ENCODE measurements at regions of chr7 and their contacts with region 1.

Region 1: GRCh38 chr7:2863461-2864066 is 19.5 kb upstream of the GNA12 start:
- DNase-seq: peak; percentile 94
- ATAC-seq: peak; percentile 97
- H3K4me3 ChIP-seq: peak overlapping the region; percentile 54
- H3K27ac ChIP-seq: peak overlapping the region; percentile 97
- H3K4me1 ChIP-seq: peaks cover 23% of the 10 kb centered on the region
- H3K27me3 ChIP-seq: no peaks in the 10 kb centered on the region
- CTCF ChIP-seq: no peak

Region 2: DNA sequence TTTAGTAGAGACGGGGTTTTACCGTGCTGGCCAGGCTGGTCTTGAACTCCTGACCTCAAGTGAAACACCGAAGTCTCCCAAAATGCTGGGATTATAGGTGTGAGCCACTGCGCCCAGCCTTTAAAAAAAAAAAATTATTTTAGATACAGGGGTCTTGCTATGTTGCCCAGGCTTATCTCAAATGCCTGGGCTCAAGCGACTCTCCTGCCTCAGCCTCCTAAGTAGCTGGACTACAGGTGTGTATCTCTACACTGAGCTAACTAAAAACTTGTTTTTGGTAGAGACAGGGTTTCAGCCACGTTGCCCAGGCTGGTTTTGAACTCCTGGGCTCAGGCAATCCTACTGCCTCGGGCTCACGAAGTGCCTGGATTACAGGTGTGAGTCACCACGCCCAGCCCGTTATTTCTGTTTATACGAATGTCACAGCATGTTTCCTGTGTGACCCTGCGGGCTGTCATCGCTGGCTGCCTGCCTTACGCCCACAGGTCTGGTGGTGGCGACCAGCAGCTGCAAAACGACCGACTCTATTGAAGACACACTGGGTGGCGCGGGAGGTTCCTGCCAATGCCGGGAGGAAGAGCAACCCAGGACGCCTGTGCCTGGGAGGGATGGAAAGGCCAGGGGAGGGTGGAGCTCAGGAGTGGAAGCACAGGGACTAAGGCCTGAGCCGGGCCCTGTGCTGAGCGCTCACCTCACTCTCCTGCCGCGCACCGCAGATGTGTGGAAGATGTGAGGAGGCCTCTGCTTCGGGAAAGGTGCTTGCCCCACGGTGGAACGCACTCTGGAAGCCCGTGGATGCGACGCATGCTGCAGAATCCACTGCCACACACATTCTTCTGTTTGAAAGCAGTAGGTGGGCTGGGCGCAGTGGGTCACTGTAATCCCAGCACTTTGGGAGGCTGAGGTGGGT is 142.7 kb before region 1 on chr7:
- CTCF ChIA-PET with region 1: no interaction called
- POLR2A ChIA-PET with region 1: no interaction called
- intact Hi-C with region 1: loop called (anchors 5 kb)
- DNase-seq: peak; percentile 96
- ATAC-seq: peak; percentile 96
- H3K4me3 ChIP-seq: no peak overlapping the region
- H3K27ac ChIP-seq: peak overlapping the region; percentile 45
- H3K4me1 ChIP-seq: 0 out of 2 replicates have a peak, but pooled peaks cover 3% of the 10 kb centered on the region
- H3K27me3 ChIP-seq: no peaks in the 10 kb centered on the region
- CTCF ChIP-seq: peak; percentile 69

Region 3: DNA sequence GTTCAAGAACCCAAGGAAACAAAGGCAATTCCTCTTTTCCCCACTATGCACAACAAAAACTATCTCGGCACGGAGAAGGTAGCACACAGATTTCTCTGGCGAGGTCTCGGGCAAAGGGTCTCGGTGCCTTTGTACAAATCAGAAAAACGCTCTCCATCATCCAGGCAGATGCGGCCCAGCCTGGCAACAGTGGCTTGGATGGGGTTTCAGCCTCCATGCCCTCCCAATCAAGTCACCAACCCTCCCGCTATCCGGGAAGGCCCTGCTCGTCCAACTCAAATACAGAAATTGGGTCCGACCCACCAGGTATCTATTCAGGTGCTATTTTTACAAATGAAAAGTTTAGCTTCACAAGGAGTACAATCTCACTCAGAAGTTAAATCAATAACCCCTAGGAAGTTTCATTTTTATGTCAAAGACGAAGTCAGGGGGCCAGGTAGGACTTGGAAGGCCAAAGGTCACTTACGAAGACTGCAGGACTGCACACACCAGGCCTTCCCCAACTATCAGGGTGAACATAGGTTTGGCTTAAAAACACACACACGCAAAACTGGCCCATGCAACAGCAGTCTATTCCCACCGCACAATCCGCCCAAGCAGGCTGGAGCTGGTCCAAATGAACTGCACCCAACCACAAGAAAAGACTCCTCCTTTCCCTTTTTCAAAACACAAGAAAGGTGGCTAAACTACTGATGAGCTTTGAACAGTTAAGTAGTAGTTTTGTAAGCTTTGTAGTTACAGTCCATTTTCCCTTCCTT is 62.5 kb before region 1 on chr7:
- CTCF ChIA-PET with region 1: no interaction called
- POLR2A ChIA-PET with region 1: no interaction called
- intact Hi-C with region 1: no loop called
- DNase-seq: peak; percentile 58
- ATAC-seq: no peak
- H3K4me3 ChIP-seq: peak overlapping the region; percentile 56
- H3K27ac ChIP-seq: peak overlapping the region; percentile 92
- H3K4me1 ChIP-seq: peaks cover 41% of the 10 kb centered on the region
- H3K27me3 ChIP-seq: no peaks in the 10 kb centered on the region
- CTCF ChIP-seq: no peak

Region 4: GRCh38 chr7:2851497-2851896 is 12.1 kb before region 1 on chr7:
- CTCF ChIA-PET with region 1: no interaction called
- POLR2A ChIA-PET with region 1: interaction called, 20 read pairs
- intact Hi-C with region 1: no loop called
- DNase-seq: no peak
- ATAC-seq: no peak
- H3K4me3 ChIP-seq: no peak overlapping the region
- H3K27ac ChIP-seq: no peak overlapping the region
- H3K4me1 ChIP-seq: no peaks in the 10 kb centered on the region
- H3K27me3 ChIP-seq: no peaks in the 10 kb centered on the region
- CTCF ChIP-seq: no peak

Region 5: GRCh38 chr7:3154912-3155494 is 291.4 kb after region 1 on chr7:
- CTCF ChIA-PET with region 1: no interaction called
- POLR2A ChIA-PET with region 1: no interaction called
- intact Hi-C with region 1: loop called (anchors 1 kb)
- DNase-seq: peak; percentile 72
- ATAC-seq: peak; percentile 36; the same call in 1 of the 2 replicates
- H3K4me3 ChIP-seq: no peak overlapping the region
- H3K27ac ChIP-seq: no peak overlapping the region
- H3K4me1 ChIP-seq: peaks cover 8% of the 10 kb centered on the region
- H3K27me3 ChIP-seq: no peaks in the 10 kb centered on the region
- CTCF ChIP-seq: peak; percentile 78

Region 6: DNA sequence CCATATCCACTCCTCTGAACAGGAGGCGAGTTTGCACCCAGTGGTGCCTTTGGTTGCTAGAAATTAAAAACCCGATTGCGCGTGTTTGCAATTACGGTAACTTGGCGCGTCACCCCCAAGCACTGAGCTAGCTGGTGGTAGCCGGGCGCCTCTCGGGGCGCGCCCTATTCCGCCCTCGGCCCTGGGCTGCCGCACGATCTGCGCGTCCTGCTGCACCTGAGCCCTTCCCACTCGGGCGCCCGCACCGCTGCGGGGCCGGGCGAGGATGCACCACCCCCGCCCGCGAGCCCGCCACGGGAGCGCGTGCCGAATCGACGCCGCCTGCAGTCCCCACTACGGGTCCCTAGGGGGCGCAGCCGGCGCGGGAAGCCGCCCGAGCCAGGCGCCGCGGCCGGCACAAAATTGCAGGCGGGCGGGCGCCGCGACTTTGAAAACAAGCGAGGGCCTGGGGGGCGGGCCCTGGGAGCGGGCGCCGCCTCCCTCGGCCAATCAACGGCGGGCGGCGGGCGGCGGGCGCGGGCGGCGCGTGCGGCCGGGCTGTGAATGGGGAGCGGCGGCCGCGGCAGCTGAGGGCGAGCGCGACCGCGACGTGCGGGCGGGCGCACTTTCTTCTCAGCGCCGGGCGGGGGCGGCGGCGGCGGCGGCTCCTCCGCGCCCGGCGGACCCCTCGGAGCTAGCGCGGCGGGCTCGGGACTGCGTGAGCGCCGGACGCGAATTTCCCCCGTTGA is 437.3 kb after region 1 on chr7 and contains the start of gene SDK1:
- CTCF ChIA-PET with region 1: no interaction called
- POLR2A ChIA-PET with region 1: no interaction called
- intact Hi-C with region 1: loop called (anchors 10 kb)
- DNase-seq: peak; percentile 83
- ATAC-seq: peak; percentile 90
- H3K4me3 ChIP-seq: peak within 1 kb of the TSS; percentile 67
- H3K27ac ChIP-seq: no peak within 1 kb of the TSS
- H3K4me1 ChIP-seq: no peaks in the 10 kb centered on the region; the same call in 1 of the 2 replicates
- H3K27me3 ChIP-seq: peaks cover 26% of the 10 kb centered on the region
- CTCF ChIP-seq: peak; percentile 66
- total RNA-seq, gene SDK1: 2.8 and 4.8 TPM in 2 replicates

Measured in PC-3 (cell line).